ENCODE measurements at regions of chr11 and their contacts with region 1.

Region 1: GRCh38 chr11:44519989-44520737 is 45.3 kb upstream of the CD82 start:
- DNase-seq: peak in 1 of 7 donors; percentile 47
- H3K4me3 ChIP-seq: no peak overlapping the region
- H3K27ac ChIP-seq: peak overlapping the region in 1 of 5 donors; percentile 29
- H3K4me1 ChIP-seq: no peaks in the 10 kb centered on the region
- H3K27me3 ChIP-seq: no peaks in the 10 kb centered on the region
- CTCF ChIP-seq: no peak
- POLR2A ChIP-seq: no peak

Region 2: GRCh38 chr11:44104481-44105294 is 415.5 kb before region 1 on chr11:
- intact Hi-C with region 1: loop called in 1 of 2 experiments (anchors 10 kb)
- DNase-seq: no peak
- H3K4me3 ChIP-seq: no peak overlapping the region
- H3K27ac ChIP-seq: no peak overlapping the region
- H3K4me1 ChIP-seq: no peaks in the 10 kb centered on the region
- H3K27me3 ChIP-seq: no peaks in the 10 kb centered on the region
- CTCF ChIP-seq: no peak
- POLR2A ChIP-seq: no peak

Region 3: DNA sequence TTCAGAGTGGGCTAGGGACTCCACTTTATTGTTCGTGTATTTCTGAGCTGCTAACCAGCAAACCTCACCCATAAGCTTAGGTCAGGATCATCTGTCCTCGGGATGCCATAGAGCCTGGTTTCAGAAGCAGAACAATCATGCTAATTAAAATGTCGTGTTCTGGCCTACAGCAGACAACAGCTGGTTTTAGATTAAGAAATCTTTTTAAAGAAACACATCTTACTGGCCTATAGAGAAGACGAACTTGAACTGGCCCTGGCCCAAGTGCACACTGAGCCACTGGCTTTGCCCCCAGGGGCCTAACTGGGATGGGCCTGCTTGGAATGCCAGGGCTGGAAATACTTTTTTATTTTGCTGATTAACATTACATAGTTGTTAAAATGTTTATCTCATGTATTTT is 273.4 kb before region 1 on chr11:
- intact Hi-C with region 1: no loop called
- DNase-seq: no peak
- H3K4me3 ChIP-seq: no peak overlapping the region
- H3K27ac ChIP-seq: peak overlapping the region in 1 of 5 donors; percentile 36
- H3K4me1 ChIP-seq: no peaks in the 10 kb centered on the region
- H3K27me3 ChIP-seq: no peaks in the 10 kb centered on the region
- CTCF ChIP-seq: no peak
- POLR2A ChIP-seq: no peak

Region 4: DNA sequence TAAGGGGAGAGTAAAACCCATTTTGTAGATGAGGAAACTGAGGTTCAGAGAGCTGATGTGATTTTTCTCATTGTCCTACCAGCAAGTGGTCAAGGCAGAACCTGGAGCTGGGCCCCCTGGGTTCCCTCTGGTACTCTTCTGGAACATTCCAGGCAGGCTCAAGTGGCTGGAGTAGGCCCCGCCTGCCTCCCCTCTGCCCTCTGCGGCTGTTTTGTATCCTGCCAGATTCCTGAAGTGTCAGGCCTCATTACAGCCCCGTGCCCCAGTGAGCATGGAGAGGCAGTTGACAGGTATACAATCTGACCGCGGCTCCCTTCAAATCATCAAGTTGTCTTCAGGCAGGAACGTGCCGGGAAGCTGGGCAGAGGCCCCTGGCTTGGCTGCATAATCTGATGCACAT is 49.3 kb before region 1 on chr11:
- intact Hi-C with region 1: no loop called
- DNase-seq: no peak
- H3K4me3 ChIP-seq: no peak overlapping the region
- H3K27ac ChIP-seq: no peak overlapping the region
- H3K4me1 ChIP-seq: no peaks in the 10 kb centered on the region
- H3K27me3 ChIP-seq: peaks cover 8% of the 10 kb centered on the region
- CTCF ChIP-seq: no peak
- POLR2A ChIP-seq: no peak

Region 5: DNA sequence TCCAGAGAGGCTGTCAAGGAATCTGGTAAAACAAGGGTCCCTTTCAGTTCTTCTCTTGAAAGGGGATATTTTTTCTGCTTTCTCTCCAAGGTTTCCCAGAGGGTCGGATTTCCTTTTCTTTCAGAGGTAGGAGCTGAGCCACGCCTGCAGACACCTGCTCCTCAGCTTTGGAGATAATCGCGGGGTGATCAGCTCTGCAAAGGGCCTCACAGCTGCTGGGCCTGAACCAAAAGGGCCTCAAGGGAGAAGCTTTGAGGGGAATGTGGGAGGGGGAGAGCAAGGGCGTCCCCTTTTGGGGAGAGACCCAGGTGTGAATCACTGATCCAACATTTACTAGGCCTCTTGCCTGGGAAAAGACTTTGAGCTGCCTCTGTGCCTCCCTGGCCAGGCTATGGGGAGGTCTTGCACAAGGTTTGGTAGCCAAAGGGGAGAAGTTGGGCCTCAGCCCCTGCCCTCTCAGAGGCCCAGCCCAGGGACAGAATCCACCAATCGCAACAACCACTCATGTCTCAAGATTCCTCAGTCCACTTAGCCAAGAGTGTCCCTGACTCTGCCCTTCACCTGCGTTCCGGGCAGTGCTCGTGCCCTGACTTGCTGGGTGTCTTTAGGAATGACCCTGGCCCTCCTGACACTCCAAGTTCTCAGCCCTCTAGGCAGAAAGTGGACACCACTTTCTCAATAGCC is 444.5 kb after region 1 on chr11:
- intact Hi-C with region 1: no loop called
- DNase-seq: no peak
- H3K4me3 ChIP-seq: no peak overlapping the region
- H3K27ac ChIP-seq: no peak overlapping the region
- H3K4me1 ChIP-seq: no peaks in the 10 kb centered on the region
- H3K27me3 ChIP-seq: no peaks in the 10 kb centered on the region
- CTCF ChIP-seq: no peak
- POLR2A ChIP-seq: no peak

Measured in adrenal gland (tissue), 19 donors.